ENCODE measurements at regions of chr16 and their contacts with region 1.

Region 1: GRCh38 chr16:1929578-1930337 is 11.5 kb upstream of the HS3ST6 start:
- DNase-seq: peak; percentile 82 to 88
- ATAC-seq: peak; percentile 82 to 84
- H3K4me3 ChIP-seq: peak overlapping the region; percentile 65
- H3K27ac ChIP-seq: peak overlapping the region; percentile 98 to 99
- H3K4me1 ChIP-seq: peaks cover 40% of the 10 kb centered on the region
- CTCF ChIP-seq: peak; percentile 97
- EP300 ChIP-seq: no peak
- POLR2A ChIP-seq: peak; percentile 39; the same call in 1 of the 2 replicates
- RAD21 ChIP-seq: peak; percentile 87 to 99

Region 2: DNA sequence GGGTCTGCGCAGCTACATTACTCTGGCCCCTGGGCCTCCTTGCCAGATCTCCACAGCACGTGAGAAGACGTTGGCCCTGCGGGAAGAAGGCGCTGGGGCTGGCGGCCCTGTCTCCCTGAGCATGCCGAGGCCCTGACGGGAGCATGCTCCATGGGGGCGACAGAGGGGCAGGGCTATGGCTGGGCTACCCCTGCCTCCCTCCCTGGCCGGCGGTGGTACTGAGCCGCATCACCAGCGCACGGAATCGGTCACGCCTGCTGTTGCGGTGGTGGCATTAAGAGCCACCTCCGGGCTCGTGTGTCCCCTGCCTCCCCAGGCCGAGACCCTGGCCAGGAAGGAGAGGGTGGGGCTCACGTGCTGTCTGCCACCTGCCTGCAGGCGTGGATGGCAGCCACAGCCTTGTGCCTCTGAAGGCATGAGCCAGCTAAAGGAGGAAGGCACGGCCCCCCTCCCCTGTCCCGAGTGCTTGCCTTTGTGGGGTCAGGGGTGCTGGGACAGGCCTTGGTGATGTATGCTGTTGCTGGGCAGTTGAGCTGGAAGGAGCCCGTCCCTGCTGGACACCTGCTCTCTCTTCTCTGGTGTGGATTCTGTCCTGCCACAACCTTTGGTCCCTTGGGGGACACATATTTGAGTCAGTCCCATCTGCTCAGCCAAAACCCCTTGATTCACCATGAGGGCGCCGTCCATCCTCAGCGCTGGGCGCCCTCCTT is 195.5 kb before region 1 on chr16:
- CTCF ChIA-PET with region 1: no interaction called
- POLR2A ChIA-PET with region 1: no interaction called
- DNase-seq: no peak
- ATAC-seq: no peak
- H3K4me3 ChIP-seq: no peak overlapping the region
- H3K27ac ChIP-seq: no peak overlapping the region
- H3K4me1 ChIP-seq: no peaks in the 10 kb centered on the region
- CTCF ChIP-seq: no peak
- EP300 ChIP-seq: no peak
- POLR2A ChIP-seq: no peak
- RAD21 ChIP-seq: no peak

Region 3: DNA sequence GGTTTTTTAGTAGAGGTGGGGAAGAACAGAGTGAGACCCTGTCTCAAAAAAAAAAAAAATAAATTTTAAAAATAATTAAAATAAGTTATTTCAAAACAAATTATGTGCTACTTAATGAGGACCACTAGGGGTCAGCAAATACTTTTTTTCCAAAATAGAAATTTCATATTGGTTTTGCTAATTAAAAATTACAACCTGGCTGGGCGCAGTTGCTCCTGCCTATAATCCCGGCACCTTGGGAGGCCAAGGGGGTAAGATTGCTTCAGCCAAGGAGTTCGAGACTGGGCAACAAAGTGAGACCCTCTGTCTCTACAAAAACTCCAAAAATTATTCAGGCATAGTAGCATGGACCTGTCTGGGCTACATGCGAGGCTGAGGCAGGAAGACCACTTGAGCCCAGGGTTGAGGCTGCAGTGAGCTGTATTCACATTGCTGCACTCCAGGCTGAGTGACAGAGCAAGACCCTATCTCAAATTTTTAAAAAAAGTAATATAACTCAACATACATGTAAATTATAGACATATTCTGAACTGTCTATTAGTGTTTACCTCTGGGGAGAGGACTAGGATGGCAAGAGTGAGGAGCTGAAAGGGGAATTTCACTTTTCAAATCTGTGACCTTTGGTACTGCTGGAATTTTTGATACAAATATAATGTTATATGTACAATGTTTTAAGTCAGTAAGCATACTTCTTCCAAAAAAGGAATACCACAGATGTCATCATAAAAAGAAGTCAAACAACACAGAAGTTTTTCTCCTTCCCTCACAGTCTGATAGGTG is 65.9 kb before region 1 on chr16:
- CTCF ChIA-PET with region 1: interaction called, 396 read pairs
- POLR2A ChIA-PET with region 1: interaction called, 3 read pairs
- DNase-seq: peak in 1 of 2 experiments; percentile 44
- ATAC-seq: peak; percentile 66 to 74; a peak in 5 of 6 replicates
- H3K4me3 ChIP-seq: no peak overlapping the region
- H3K27ac ChIP-seq: peak overlapping the region; percentile 37 to 67; a peak in 5 of 6 replicates
- H3K4me1 ChIP-seq: peaks cover 26% of the 10 kb centered on the region
- CTCF ChIP-seq: peak; percentile 84
- EP300 ChIP-seq: no peak
- POLR2A ChIP-seq: no peak
- RAD21 ChIP-seq: peak; percentile 75 to 90

Region 4: DNA sequence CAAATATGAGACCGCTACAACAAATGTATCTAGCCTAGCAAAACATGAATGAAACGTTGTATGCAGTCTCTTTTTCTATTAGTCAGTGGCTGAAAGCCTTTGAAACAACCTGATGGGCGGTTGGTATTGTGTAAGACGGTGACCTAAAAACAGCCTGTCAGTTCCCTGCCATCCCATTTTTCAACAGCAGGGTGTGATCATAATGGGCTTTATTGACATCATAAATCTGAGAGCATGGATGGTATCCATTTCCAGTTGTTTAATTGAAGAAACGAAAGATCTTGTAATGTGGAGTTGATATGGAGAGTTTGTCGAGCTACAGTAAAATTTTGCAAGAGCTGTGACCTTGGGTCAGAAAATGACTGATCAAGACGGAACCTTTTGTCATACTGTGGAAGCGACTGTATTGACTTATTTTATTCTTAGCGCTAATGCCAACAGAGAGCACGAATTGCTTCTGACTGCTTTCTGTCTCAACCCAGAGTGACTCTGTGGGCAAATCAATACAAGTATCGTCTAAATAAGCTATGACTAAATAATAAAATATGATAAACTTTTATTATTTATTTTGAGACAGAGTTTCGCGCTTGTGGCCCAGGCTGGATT is 45.5 kb before region 1 on chr16:
- CTCF ChIA-PET with region 1: interaction called, 396 read pairs
- POLR2A ChIA-PET with region 1: interaction called, 3 read pairs
- DNase-seq: peak; percentile 71 to 72
- ATAC-seq: peak; percentile 78; a peak in 5 of 6 replicates
- H3K4me3 ChIP-seq: no peak overlapping the region
- H3K27ac ChIP-seq: no peak overlapping the region
- H3K4me1 ChIP-seq: peaks cover 6% of the 10 kb centered on the region; the same call in 1 of the 3 replicates
- CTCF ChIP-seq: no peak
- EP300 ChIP-seq: no peak
- POLR2A ChIP-seq: no peak
- RAD21 ChIP-seq: 0 out of 5 replicates have a peak, but pooled peaks of 1 of the 2 experiments have one; percentile 11

Region 5: DNA sequence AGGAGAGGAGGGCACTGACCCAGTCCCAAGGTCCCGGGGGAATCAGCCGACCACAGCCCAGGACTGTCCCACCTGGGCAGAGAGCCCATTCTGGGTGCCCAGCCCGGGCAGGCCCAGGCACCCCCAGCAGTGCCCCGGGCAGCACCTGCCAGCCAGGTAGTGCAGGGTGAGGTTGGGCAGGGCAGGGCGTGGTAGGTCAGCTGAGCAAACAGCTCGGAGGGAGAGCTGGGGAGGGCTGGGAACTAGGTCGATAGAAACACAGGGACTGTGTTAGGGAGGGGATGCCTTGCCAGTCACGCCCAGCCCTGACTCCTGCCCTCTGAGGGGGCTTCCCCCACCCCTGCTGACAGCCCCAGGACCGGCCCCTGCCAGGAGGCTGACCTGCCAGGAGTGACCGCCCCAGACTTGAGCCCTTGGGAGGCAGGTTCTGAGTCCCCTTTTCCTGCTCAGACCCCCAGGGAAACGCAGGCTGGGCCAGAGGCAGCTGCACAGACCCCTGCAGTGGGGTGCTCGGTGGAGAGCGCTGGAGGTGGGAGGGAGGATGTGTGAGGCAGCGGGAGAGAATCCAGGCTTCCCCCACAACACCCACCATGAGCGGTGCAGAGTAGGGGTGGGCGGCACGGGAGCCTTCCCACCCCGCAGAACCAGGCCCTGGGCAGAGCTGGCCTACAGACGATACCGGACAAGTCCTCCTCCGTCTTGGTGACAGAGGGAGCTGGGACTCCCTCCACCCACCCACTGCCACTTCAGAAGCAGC is 16.3 kb before region 1 on chr16:
- CTCF ChIA-PET with region 1: interaction called, 27 read pairs
- POLR2A ChIA-PET with region 1: no interaction called
- DNase-seq: no peak
- ATAC-seq: peak in 1 of 2 experiments; percentile 22; a peak in 3 of 6 replicates
- H3K4me3 ChIP-seq: no peak overlapping the region
- H3K27ac ChIP-seq: peak overlapping the region; percentile 38 to 75; a peak in 5 of 6 replicates
- H3K4me1 ChIP-seq: peaks cover 35% of the 10 kb centered on the region
- CTCF ChIP-seq: no peak
- EP300 ChIP-seq: no peak
- POLR2A ChIP-seq: no peak
- RAD21 ChIP-seq: no peak

Region 6: GRCh38 chr16:1950047-1950446 is 20.3 kb after region 1 on chr16:
- CTCF ChIA-PET with region 1: interaction called, 11 read pairs
- POLR2A ChIA-PET with region 1: no interaction called
- DNase-seq: no peak
- ATAC-seq: peak; percentile 34 to 46
- H3K4me3 ChIP-seq: no peak overlapping the region
- H3K27ac ChIP-seq: no peak overlapping the region
- H3K4me1 ChIP-seq: no peaks in the 10 kb centered on the region
- CTCF ChIP-seq: no peak
- EP300 ChIP-seq: no peak
- POLR2A ChIP-seq: no peak
- RAD21 ChIP-seq: no peak

Region 7: GRCh38 chr16:1983544-1984346 is 54.0 kb after region 1 on chr16 and contains the start of gene GFER:
- CTCF ChIA-PET with region 1: no interaction called
- POLR2A ChIA-PET with region 1: no interaction called
- DNase-seq: peak; percentile 94 to 96
- ATAC-seq: peak; percentile 72 to 85
- H3K4me3 ChIP-seq: peak within 1 kb of the TSS; percentile 67
- H3K27ac ChIP-seq: peak within 1 kb of the TSS; percentile 86 to 94
- H3K4me1 ChIP-seq: peaks cover 37% of the 10 kb centered on the region
- CTCF ChIP-seq: peak; percentile 50; the same call in 2 of the 3 replicates
- EP300 ChIP-seq: no peak
- POLR2A ChIP-seq: peak; percentile 85
- RAD21 ChIP-seq: 0 out of 5 replicates have a peak, but pooled peaks of 1 of the 2 experiments have one; percentile 18
- polyA plus RNA-seq, gene GFER: 11.9 and 12.9 TPM in 2 replicates